AG04450 (cell line): ENCODE measurements at regions of chr4 and their contacts with region 1.

Region 1: GRCh38 chr4:74376888-74377483 is 12.0 kb downstream of the EREG start:
- DNase-seq: no peak
- H3K4me3 ChIP-seq: no peak overlapping the region
- H3K27ac ChIP-seq: no peak overlapping the region
- H3K27me3 ChIP-seq: no peaks in the 10 kb centered on the region
- CTCF ChIP-seq: peak; percentile 72

Region 2: GRCh38 chr4:74320559-74321118 is 56.3 kb before region 1 on chr4:
- CTCF ChIA-PET with region 1: interaction called, 45 read pairs
- POLR2A ChIA-PET with region 1: no interaction called
- DNase-seq: peak; percentile 46
- H3K4me3 ChIP-seq: no peak overlapping the region
- H3K27ac ChIP-seq: no peak overlapping the region
- H3K27me3 ChIP-seq: no peaks in the 10 kb centered on the region
- CTCF ChIP-seq: peak; percentile 69

Region 3: DNA sequence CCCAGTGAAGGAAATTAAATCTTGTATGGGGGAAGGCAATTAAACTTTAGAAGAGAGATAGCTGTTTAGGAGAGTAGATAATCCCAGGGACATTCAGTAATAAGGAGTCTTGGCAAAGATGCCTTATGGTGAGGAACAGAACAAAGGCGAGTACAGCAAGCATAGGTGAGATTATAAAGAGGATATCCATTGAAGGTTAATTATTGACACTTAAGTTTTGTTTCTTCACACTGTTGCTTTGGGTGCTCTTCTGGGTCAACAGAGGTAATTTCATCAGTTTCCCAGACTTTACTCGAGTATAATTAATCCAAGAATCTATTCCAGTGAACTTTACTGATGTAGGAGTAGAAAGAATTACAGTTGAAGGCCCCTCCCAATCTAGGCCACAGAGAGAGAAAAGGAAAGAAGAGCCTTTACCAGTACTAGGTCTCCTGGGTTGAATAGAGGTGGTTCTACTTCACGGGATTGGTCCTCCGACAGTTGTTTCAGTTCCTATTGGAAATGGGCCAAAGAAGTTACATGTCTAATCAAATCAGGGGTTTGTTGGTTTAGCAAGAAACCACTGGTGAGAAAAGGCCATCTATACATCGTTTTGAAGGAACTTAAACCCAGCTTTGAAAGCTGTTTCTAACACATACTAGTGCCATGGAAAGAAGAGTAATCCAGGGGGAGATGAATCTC is 41.5 kb before region 1 on chr4:
- CTCF ChIA-PET with region 1: no interaction called
- POLR2A ChIA-PET with region 1: no interaction called
- DNase-seq: no peak
- H3K4me3 ChIP-seq: no peak overlapping the region
- H3K27ac ChIP-seq: no peak overlapping the region
- H3K27me3 ChIP-seq: no peaks in the 10 kb centered on the region
- CTCF ChIP-seq: no peak

Region 4: DNA sequence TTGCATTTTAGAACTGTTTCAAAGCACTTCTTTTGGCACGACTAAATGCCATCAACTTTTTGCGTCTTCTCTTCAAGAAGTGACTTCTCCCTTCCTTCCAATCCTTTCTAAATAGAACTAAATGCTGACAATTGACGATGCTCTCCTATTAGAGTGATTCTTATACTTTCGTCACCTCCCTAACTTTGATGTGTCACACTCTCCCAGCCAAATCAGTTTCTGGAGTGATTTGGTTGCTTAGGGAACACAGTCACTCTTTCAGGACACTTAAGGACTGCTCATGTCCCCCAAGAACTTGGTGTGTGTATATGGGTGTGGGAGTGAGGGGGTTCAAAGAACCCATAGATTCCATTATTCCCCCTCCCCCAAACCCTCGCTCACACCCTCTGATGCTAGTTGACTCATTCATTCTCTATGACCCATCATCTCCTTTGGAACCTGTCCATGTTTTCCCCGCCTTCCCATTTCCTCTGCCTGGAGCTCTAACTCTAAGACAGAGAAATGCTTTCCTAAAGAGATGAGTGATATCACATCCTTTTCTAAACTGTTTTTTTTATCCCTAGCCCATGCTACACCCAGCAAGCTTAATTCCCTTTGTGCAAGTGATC is 41.2 kb after region 1 on chr4:
- CTCF ChIA-PET with region 1: interaction called, 11 read pairs
- POLR2A ChIA-PET with region 1: no interaction called
- DNase-seq: peak; percentile 16
- H3K4me3 ChIP-seq: no peak overlapping the region
- H3K27ac ChIP-seq: no peak overlapping the region
- H3K27me3 ChIP-seq: no peaks in the 10 kb centered on the region
- CTCF ChIP-seq: no peak

Region 5: GRCh38 chr4:74531963-74532794 is 155.2 kb after region 1 on chr4:
- CTCF ChIA-PET with region 1: interaction called, 55 read pairs
- POLR2A ChIA-PET with region 1: no interaction called
- DNase-seq: peak; percentile 59
- H3K4me3 ChIP-seq: no peak overlapping the region
- H3K27ac ChIP-seq: no peak overlapping the region
- H3K27me3 ChIP-seq: no peaks in the 10 kb centered on the region
- CTCF ChIP-seq: peak; percentile 64

Region 6: GRCh38 chr4:74623041-74623440 is 246.1 kb after region 1 on chr4:
- CTCF ChIA-PET with region 1: interaction called, 23 read pairs
- POLR2A ChIA-PET with region 1: no interaction called
- DNase-seq: no peak
- H3K4me3 ChIP-seq: no peak overlapping the region
- H3K27ac ChIP-seq: no peak overlapping the region
- H3K27me3 ChIP-seq: no peaks in the 10 kb centered on the region
- CTCF ChIP-seq: peak; percentile 30; the same call in 1 of the 2 replicates

Region 7: DNA sequence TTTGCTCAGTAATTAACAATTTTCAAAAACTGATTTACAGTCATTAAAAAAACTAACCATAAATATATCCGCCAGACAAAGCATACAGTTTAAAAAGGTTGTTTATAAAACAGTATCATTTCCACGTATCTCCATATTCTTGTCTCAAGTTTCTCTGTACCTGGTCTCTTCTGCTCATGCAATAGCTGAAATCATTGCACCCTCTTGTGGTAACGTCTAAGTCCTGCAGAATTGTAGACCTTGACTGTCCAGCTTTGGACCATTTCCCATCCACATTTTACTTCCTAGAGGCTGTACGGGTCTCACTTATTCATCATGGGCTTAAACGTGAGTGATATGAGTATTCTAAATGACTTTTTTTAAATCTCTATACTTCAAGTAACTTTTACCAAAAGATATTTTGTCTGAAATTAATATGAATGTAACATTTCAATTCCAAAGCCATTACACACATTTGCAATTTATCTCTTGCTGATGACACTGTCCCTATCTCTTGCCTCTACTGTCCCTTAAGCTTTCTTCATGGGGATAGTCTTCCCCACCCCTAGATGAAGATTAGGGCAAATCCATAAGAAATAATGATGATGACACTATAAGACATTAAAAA is 298.8 kb after region 1 on chr4:
- CTCF ChIA-PET with region 1: interaction called, 148 read pairs
- POLR2A ChIA-PET with region 1: interaction called, 6 read pairs
- DNase-seq: peak; percentile 38
- H3K4me3 ChIP-seq: no peak overlapping the region
- H3K27ac ChIP-seq: no peak overlapping the region
- H3K27me3 ChIP-seq: no peaks in the 10 kb centered on the region
- CTCF ChIP-seq: peak; percentile 89

Region 8: GRCh38 chr4:74738470-74739140 is 361.6 kb after region 1 on chr4:
- CTCF ChIA-PET with region 1: no interaction called
- POLR2A ChIA-PET with region 1: no interaction called
- DNase-seq: no peak
- H3K4me3 ChIP-seq: no peak overlapping the region
- H3K27ac ChIP-seq: no peak overlapping the region
- H3K27me3 ChIP-seq: no peaks in the 10 kb centered on the region
- CTCF ChIP-seq: no peak

Region 9: GRCh38 chr4:75469896-75470295 is 1092.9 kb after region 1 on chr4:
- CTCF ChIA-PET with region 1: interaction called, 10 read pairs
- POLR2A ChIA-PET with region 1: no interaction called
- DNase-seq: no peak
- H3K4me3 ChIP-seq: no peak overlapping the region
- H3K27ac ChIP-seq: no peak overlapping the region
- H3K27me3 ChIP-seq: no peaks in the 10 kb centered on the region
- CTCF ChIP-seq: no peak